Activated naive CD8-positive, alpha-beta T cell treated with anti-CD3 and anti-CD28 coated beads, Interleukin-2, amount 10 ng/mL, durations not matched to agents 7 days and 5 days (primary cell): ENCODE measurements at regions of chr17 and their contacts with region 1.

Region 1: GRCh38 chr17:14205989-14206461 is 30.6 kb downstream of the CDRT15 start:
- DNase-seq: no peak
- ATAC-seq: peak; percentile 25
- H3K4me3 Mint-ChIP-seq: peak overlapping the region; percentile 30
- H3K27ac Mint-ChIP-seq: no peak overlapping the region
- H3K4me1 Mint-ChIP-seq: peaks cover 47% of the 10 kb centered on the region
- H3K27me3 Mint-ChIP-seq: no peaks in the 10 kb centered on the region

Region 2: DNA sequence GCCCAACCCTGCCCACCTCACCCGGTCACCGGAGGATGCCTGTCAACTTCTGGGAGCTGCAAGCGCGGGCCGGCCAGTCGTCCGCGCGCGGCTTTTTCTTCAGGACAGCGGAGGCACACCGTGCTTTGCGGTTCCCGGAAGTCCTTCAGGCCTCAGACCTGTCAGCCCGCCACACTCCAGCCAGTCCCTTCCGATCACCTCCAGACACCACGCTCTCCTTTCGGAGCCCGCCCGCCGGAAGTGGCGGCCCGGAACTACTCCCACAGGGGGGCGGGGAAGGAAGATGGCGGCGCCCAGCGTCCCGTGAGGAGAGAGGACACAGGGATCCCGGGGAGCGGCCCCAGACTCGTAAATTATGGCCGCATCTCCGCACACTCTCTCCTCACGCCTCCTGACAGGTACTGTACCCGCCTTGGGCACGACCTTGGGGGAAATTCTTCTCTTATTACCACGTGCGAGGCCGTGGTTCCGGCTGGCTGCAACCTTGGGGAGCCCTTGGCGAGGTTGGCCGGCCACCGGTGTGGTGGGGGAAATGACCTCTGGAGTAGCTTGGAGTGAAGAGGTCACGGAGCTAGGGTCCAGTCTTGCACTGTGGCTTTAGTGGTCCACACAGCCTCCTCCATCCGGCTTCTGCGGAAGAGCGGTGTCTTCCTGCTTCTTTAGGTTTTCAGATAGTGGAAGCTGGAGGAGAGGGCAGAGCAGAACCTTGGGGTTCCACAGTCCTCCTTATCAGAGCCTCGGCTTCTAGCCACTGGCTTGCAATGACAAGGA is 136.6 kb before region 1 on chr17 and contains the start of gene COX10:
- POLR2A ChIA-PET with region 1: interaction called, 13 read pairs
- DNase-seq: peak; percentile 87
- ATAC-seq: peak; percentile 94
- H3K4me3 Mint-ChIP-seq: peak within 1 kb of the TSS; percentile 93
- H3K27ac Mint-ChIP-seq: peak within 1 kb of the TSS; percentile 91
- H3K4me1 Mint-ChIP-seq: peaks cover 32% of the 10 kb centered on the region
- H3K27me3 Mint-ChIP-seq: no peaks in the 10 kb centered on the region
- total RNA-seq, gene COX10: 17.1 to 19.8 TPM

Region 3: DNA sequence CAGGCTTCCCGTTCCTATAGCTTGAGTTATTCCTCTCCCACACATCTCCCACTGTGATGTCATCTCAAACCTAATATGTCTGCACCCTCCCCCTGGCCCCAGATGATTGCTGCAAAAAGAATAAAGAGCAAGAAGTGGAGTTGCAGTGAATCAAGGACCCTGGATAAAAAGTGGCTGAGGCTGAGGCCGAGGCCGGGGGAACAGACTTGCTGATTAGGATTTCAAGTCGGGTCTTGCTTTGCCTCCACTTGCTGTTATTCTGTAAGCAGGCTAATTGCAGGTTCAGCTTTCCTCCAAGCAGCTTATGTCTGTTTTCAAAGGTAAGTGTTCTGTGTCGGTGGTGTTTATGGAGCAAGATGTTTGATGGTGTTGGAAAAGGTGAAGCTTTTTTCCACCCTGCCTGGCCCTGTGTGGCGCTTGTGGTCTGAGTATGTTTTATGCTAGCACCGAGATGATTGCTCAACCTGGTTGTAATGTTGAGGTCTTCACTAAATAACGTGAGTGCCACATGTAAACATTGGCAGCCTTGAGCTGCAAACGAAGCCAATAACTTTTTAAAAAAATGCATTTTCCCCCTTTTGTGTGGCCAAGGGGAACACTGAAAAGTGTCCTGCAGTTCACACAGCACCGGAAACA is 110.2 kb after region 1 on chr17:
- POLR2A ChIA-PET with region 1: no interaction called
- DNase-seq: no peak
- ATAC-seq: no peak
- H3K4me3 Mint-ChIP-seq: no peak overlapping the region
- H3K27ac Mint-ChIP-seq: no peak overlapping the region
- H3K4me1 Mint-ChIP-seq: peaks cover 18% of the 10 kb centered on the region
- H3K27me3 Mint-ChIP-seq: peaks cover 8% of the 10 kb centered on the region